Activated T-helper 2 cell treated with anti-CD3 and anti-CD28 coated beads, Interferon-gamma antibody, Interleukin-2, Interleukin-4, amounts not matched to agents 10 μg/mL and 5 μg/mL and 100 μg/mL, durations not matched to agents 14 hours and 24 hours and 36 hours (primary cell): ENCODE measurements at regions of chr1 and their contacts with region 1.

Region 1: DNA sequence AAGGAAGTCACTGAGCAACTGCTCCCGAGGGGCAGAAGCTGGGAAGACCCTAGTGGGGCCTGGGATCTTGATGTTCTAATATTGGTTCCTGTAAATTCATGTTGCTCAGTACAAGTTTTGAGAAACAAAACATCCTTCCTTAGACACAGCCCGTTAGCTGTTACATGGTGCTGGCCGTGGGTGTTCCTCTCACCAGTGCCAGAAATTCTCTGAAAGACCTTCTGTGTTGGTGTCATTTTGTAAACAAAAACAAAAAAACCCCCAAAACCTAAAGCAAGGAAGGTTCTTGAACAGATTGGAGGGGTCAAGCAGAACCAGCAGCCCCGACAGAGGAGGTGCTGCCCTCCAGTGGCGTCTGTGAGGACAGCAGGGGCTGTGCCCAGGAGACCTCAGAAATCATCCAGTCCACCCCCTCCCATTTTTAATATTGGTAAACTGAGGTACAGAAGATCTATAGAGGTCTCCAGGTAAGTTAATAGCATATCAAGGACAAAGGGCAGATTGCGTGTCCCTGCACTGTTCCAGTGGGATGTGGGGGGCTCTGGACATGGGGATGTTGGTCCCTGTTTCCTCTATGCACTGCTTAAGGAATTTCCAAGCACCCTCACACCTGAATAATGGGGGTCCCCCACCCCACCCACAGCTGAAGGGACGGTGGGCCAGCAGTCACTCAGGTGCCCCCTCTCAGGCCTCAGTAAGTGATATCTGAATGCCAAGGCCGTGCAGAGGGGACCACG is 38.2 kb downstream of the SLC2A7 start:
- DNase-seq: peak; percentile 51
- H3K4me3 Mint-ChIP-seq: no peak overlapping the region
- H3K27ac Mint-ChIP-seq: peak overlapping the region; percentile 54
- H3K4me1 Mint-ChIP-seq: peaks cover 28% of the 10 kb centered on the region
- H3K27me3 Mint-ChIP-seq: no peaks in the 10 kb centered on the region

Region 2: GRCh38 chr1:8913111-8913856 is 74.8 kb before region 1 on chr1:
- intact Hi-C with region 1: loop called (anchors 1 kb)
- DNase-seq: no peak
- H3K4me3 Mint-ChIP-seq: no peak overlapping the region
- H3K27ac Mint-ChIP-seq: no peak overlapping the region
- H3K4me1 Mint-ChIP-seq: peaks cover 13% of the 10 kb centered on the region
- H3K27me3 Mint-ChIP-seq: no peaks in the 10 kb centered on the region

Region 3: GRCh38 chr1:8947127-8947691 is 40.8 kb before region 1 on chr1:
- intact Hi-C with region 1: loop called (anchors 5 kb)
- DNase-seq: no peak
- H3K4me3 Mint-ChIP-seq: peak overlapping the region; percentile 33
- H3K27ac Mint-ChIP-seq: peak overlapping the region; percentile 96
- H3K4me1 Mint-ChIP-seq: peaks cover 55% of the 10 kb centered on the region
- H3K27me3 Mint-ChIP-seq: no peaks in the 10 kb centered on the region

Region 4: DNA sequence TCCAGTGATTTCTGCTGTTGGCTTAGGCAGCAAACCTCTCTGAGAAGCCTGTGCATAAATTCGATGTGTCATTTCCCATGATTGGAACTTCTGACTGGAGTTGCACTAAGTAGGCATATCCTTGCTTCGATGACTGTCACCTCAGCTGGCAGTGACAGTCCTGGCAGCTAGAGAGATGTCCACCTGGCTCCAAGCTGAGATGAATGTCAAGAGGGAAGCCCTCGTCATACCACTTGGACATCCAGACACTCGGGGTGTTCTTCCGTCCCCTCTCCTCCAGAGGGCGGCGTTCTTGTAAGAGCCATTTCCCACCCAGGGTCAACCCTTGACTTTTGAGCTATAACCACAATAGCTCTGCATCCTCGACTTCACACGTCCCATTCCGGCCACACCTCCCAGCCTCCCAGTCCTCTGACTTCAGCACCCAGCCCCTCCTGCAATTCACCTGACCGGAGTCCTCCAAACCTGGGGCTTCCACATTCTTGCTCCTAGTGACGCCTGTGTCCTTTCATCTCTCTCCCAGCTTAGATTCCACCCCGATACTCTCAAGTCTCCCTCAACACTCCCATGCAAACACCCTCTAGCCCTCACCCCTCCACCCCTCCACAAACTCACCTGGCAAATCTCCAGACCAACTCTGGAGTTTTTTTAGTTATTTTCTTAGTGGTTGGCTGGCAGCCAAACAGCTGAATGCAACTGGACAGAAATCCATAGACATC is 25.1 kb before region 1 on chr1:
- intact Hi-C with region 1: loop called (anchors 2 kb)
- DNase-seq: peak; percentile 36
- H3K4me3 Mint-ChIP-seq: no peak overlapping the region
- H3K27ac Mint-ChIP-seq: peak overlapping the region; percentile 15
- H3K4me1 Mint-ChIP-seq: peaks cover 48% of the 10 kb centered on the region
- H3K27me3 Mint-ChIP-seq: no peaks in the 10 kb centered on the region

Region 5: DNA sequence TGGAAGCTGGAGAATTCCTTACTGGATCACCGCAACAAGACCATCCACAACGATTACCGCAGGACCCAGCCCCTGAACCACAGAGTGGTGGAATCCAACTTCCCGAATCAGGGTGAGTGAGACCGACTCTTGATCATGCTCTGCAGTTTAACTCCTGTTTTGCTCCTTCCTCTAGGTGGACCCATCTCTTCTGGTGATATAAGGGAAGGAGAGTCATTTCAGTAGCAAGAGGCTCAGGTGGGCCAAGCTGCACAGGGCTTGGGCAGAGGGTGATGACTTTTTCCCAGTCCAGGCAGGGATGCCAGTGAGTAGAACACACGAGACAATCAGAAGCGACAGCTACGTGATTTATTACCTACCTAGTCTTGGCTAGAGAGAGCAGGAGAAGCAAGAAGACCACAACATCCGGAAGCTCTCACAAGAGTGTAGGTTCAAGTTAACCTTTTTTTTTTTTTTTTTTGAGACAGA is 17.1 kb before region 1 on chr1:
- intact Hi-C with region 1: loop called (anchors 2 kb)
- DNase-seq: peak; percentile 45
- H3K4me3 Mint-ChIP-seq: peak overlapping the region; percentile 90
- H3K27ac Mint-ChIP-seq: peak overlapping the region; percentile 93
- H3K4me1 Mint-ChIP-seq: peaks cover 41% of the 10 kb centered on the region
- H3K27me3 Mint-ChIP-seq: no peaks in the 10 kb centered on the region

Region 6: GRCh38 chr1:9151328-9151860 is 163.3 kb after region 1 on chr1:
- intact Hi-C with region 1: no loop called
- DNase-seq: no peak
- H3K4me3 Mint-ChIP-seq: no peak overlapping the region
- H3K27ac Mint-ChIP-seq: no peak overlapping the region
- H3K4me1 Mint-ChIP-seq: no peaks in the 10 kb centered on the region
- H3K27me3 Mint-ChIP-seq: no peaks in the 10 kb centered on the region